ENCODE measurements at regions of chr4 and their contacts with region 1.

Region 1: GRCh38 chr4:104930298-104930697 is 216.4 kb upstream of the TET2 start:
- DNase-seq: no peak
- H3K4me3 ChIP-seq: no peak overlapping the region
- H3K4me3 Mint-ChIP-seq: peak overlapping the region in 6 of 8 donors; percentile 7 to 63 (median 28)
- H3K27ac ChIP-seq: no peak overlapping the region
- H3K27ac Mint-ChIP-seq: peak overlapping the region in 2 of 7 donors; percentile 28 to 30
- H3K4me1 ChIP-seq: peaks cover 21% of the 10 kb centered on the region
- H3K4me1 Mint-ChIP-seq: peaks cover 10 to 27% (median 20%) of the 10 kb centered on the region in 4 donors
- H3K27me3 ChIP-seq: no peaks in the 10 kb centered on the region
- H3K27me3 Mint-ChIP-seq: no peaks in the 10 kb centered on the region

Region 2: GRCh38 chr4:103105558-103106356 is 1824.5 kb before region 1 on chr4:
- CTCF ChIA-PET with region 1: no interaction called
- POLR2A ChIA-PET with region 1: no interaction called
- intact Hi-C with region 1: no loop called
- DNase-seq: no peak
- H3K4me3 ChIP-seq: no peak overlapping the region
- H3K4me3 Mint-ChIP-seq: no peak overlapping the region
- H3K27ac ChIP-seq: no peak overlapping the region
- H3K27ac Mint-ChIP-seq: peak overlapping the region in 1 of 7 donors; percentile 68
- H3K4me1 ChIP-seq: no peaks in the 10 kb centered on the region
- H3K4me1 Mint-ChIP-seq: peaks cover 0 to 5% (median 4%) of the 10 kb centered on the region in 4 donors
- H3K27me3 ChIP-seq: no peaks in the 10 kb centered on the region
- H3K27me3 Mint-ChIP-seq: no peaks in the 10 kb centered on the region

Region 3: DNA sequence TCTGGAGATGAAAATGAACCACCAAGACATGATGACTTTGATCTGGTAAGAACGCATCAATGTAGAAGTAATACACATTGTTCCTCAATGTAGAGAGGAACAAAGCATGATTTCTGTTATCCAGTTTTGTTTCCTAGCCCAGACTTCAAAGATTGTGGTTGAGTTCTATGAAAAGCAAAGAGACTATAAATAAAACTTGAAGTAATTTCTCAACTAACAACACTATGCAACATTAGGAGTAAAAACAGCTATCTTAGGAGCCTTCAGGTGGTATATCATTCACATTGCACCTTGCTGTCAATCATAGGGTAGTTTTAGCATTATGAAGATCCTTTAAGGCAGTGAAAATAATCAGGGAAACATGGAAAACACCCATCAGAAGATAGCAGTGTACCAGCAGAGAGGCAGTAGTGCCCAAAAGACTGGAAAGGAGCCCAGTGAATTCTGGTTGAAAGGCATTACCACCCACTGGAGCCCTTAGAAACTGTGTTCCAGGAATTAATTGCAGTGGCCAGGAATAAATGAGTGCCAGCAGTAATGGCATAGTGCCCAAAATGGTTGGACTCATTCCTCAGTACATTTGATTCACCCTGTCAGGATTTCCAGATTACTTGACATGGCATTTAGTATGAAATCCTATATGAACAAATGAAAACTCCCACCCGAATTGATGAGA is 134.9 kb before region 1 on chr4:
- CTCF ChIA-PET with region 1: no interaction called
- POLR2A ChIA-PET with region 1: no interaction called
- intact Hi-C with region 1: no loop called
- DNase-seq: no peak
- H3K4me3 ChIP-seq: no peak overlapping the region
- H3K4me3 Mint-ChIP-seq: no peak overlapping the region
- H3K27ac ChIP-seq: no peak overlapping the region
- H3K27ac Mint-ChIP-seq: no peak overlapping the region
- H3K4me1 ChIP-seq: no peaks in the 10 kb centered on the region
- H3K4me1 Mint-ChIP-seq: no peaks in the 10 kb centered on the region
- H3K27me3 ChIP-seq: no peaks in the 10 kb centered on the region
- H3K27me3 Mint-ChIP-seq: no peaks in the 10 kb centered on the region

Region 4: GRCh38 chr4:104966349-104967033 is 36.2 kb after region 1 on chr4:
- CTCF ChIA-PET with region 1: no interaction called
- POLR2A ChIA-PET with region 1: interaction called, 5 read pairs
- intact Hi-C with region 1: loop called (anchors 2 kb)
- DNase-seq: peak in 4 of 5 donors; percentile 14 to 44 (median 32)
- H3K4me3 ChIP-seq: no peak overlapping the region
- H3K4me3 Mint-ChIP-seq: peak overlapping the region; percentile 60 to 85 (median 72)
- H3K27ac ChIP-seq: no peak overlapping the region
- H3K27ac Mint-ChIP-seq: peak overlapping the region; percentile 4 to 92 (median 85)
- H3K4me1 ChIP-seq: peaks cover 14% of the 10 kb centered on the region
- H3K4me1 Mint-ChIP-seq: peaks cover 5 to 13% (median 10%) of the 10 kb centered on the region in 4 donors
- H3K27me3 ChIP-seq: no peaks in the 10 kb centered on the region
- H3K27me3 Mint-ChIP-seq: peaks cover 0 to 2% of the 10 kb centered on the region in 2 donors

Region 5: GRCh38 chr4:105158837-105159236 is 228.5 kb after region 1 on chr4:
- CTCF ChIA-PET with region 1: no interaction called
- POLR2A ChIA-PET with region 1: no interaction called
- intact Hi-C with region 1: no loop called
- DNase-seq: no peak
- H3K4me3 ChIP-seq: no peak overlapping the region
- H3K4me3 Mint-ChIP-seq: no peak overlapping the region
- H3K27ac ChIP-seq: no peak overlapping the region
- H3K27ac Mint-ChIP-seq: no peak overlapping the region
- H3K4me1 ChIP-seq: peaks cover 20% of the 10 kb centered on the region
- H3K4me1 Mint-ChIP-seq: peaks cover 27 to 50% (median 37%) of the 10 kb centered on the region in 4 donors
- H3K27me3 ChIP-seq: no peaks in the 10 kb centered on the region
- H3K27me3 Mint-ChIP-seq: no peaks in the 10 kb centered on the region

Measured in CD4-positive, alpha-beta memory T cell (primary cell).